MCF 10A (cell line): ENCODE measurements at regions of chr12 and their contacts with region 1.

Region 1: DNA sequence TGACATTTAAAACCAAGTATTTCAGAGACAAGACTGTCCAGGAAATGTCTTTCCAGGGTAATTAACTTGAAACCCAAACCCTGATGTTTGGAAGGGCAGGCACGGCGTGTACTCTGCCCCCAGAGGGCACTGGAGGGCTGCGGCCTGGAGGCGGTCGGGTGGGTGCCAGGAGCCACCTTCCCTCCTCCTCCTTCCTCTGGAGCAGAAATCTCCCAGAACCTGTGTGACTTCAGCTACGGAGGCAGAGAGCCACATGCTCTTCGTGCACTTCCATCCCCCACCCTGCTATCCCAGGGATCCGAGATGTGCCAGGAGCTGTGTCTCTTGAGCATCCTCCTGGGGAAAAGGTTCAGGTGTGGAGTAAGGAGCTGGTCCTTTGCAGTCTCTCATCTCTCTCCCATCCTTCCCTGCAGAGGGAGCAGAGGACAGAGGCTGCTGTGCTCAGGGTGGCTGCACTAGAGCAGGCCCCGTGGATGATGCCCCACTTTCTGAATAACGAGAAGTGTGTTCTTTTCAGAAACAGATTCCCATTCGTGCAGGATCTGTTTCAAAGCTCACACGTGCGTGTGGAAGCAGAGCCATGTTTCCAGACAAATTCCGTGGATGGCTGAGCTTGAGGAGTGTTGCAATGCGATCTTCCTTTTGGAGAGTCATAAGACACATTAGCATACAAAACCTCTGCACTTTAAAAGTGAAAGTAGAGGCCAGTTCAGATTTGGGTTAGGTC is 162.8 kb downstream of the ADGRD1 start:
- DNase-seq: no peak
- H3K4me3 Mint-ChIP-seq: no peak overlapping the region
- H3K27ac Mint-ChIP-seq: no peak overlapping the region
- H3K4me1 Mint-ChIP-seq: peaks cover 14% of the 10 kb centered on the region
- H3K27me3 Mint-ChIP-seq: no peaks in the 10 kb centered on the region
- CTCF ChIP-seq: no peak

Region 2: GRCh38 chr12:131074221-131075083 is 42.1 kb before region 1 on chr12:
- CTCF ChIA-PET with region 1: no interaction called
- POLR2A ChIA-PET with region 1: no interaction called
- intact Hi-C with region 1: no loop called
- DNase-seq: no peak
- H3K4me3 Mint-ChIP-seq: no peak overlapping the region
- H3K27ac Mint-ChIP-seq: no peak overlapping the region
- H3K4me1 Mint-ChIP-seq: no peaks in the 10 kb centered on the region
- H3K27me3 Mint-ChIP-seq: peaks cover 19% of the 10 kb centered on the region
- CTCF ChIP-seq: no peak

Region 3: DNA sequence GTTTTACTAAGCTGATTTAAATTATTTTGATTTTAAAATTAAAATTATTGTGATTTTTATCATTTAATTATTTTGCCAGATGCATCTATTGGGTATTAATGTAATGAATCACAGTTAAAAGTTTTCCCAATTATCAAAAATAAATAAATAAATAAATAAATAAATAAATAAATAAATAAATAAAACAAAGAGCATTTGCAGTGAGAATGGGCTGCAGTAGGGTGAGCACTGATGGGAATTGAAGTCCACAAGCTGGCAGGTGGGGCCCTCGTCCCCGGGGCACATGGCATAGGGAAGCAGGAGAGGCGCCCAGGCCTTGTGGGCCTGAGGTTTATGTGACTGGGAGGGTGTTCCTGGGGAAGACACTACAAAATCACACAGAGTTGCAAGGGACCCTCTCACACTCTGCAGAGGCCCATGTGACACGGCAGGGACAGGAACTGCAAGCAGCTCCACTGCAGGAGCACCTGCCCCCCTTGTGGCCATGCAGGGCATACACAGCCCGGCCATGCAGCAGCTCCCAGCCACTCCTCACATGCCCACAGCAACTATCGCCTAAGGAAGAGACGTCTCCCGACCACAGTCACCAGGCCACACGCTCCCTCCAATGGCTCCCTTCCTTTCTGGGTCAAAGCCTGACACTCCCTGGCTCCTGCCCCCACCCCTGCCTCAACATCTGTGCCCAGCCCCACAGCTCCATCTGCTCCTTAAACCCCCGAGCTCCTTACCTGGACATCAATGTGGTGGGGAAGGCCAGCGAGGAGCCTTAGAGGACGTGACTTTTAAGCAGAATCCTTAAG is 338.1 kb after region 1 on chr12:
- CTCF ChIA-PET with region 1: interaction called, 16 read pairs
- POLR2A ChIA-PET with region 1: interaction called, 3 read pairs
- intact Hi-C with region 1: no loop called
- DNase-seq: peak; percentile 57
- H3K4me3 Mint-ChIP-seq: no peak overlapping the region
- H3K27ac Mint-ChIP-seq: no peak overlapping the region
- H3K4me1 Mint-ChIP-seq: peaks cover 5% of the 10 kb centered on the region
- H3K27me3 Mint-ChIP-seq: peaks cover 44% of the 10 kb centered on the region
- CTCF ChIP-seq: peak; percentile 92